Sigmoid colon (tissue), 7 donors: ENCODE measurements at regions of chr7 and their contacts with region 1.

Region 1: GRCh38 chr7:85041605-85042216 is 145.1 kb downstream of the SEMA3D start:
- DNase-seq: no peak
- H3K4me3 ChIP-seq: no peak overlapping the region
- H3K27ac ChIP-seq: no peak overlapping the region
- H3K4me1 ChIP-seq: no peaks in the 10 kb centered on the region
- H3K27me3 ChIP-seq: no peaks in the 10 kb centered on the region
- CTCF ChIP-seq: peak; percentile 48 to 70 (median 58)
- EP300 ChIP-seq: no peak
- POLR2A ChIP-seq: no peak

Region 2: GRCh38 chr7:85000735-85001350 is 40.9 kb before region 1 on chr7:
- intact Hi-C with region 1: no loop called
- DNase-seq: no peak
- H3K4me3 ChIP-seq: no peak overlapping the region
- H3K27ac ChIP-seq: no peak overlapping the region
- H3K4me1 ChIP-seq: peaks cover 0 to 43% (median 23%) of the 10 kb centered on the region in 4 donors
- H3K27me3 ChIP-seq: no peaks in the 10 kb centered on the region
- CTCF ChIP-seq: no peak
- EP300 ChIP-seq: no peak
- POLR2A ChIP-seq: no peak

Region 3: GRCh38 chr7:85186521-85187241 is 145.0 kb after region 1 on chr7 and contains the start of gene SEMA3D:
- intact Hi-C with region 1: loop called (anchors 5 kb)
- DNase-seq: peak; percentile 79
- H3K4me3 ChIP-seq: peak within 1 kb of the TSS; percentile 37 to 58 (median 54)
- H3K27ac ChIP-seq: peak within 1 kb of the TSS; percentile 40 to 62 (median 55)
- H3K4me1 ChIP-seq: peaks cover 0 to 22% (median 20%) of the 10 kb centered on the region in 4 donors
- H3K27me3 ChIP-seq: no peaks in the 10 kb centered on the region
- CTCF ChIP-seq: peak in 3 of 4 experiments; percentile 16 to 78 (median 60)
- EP300 ChIP-seq: no peak
- POLR2A ChIP-seq: no peak
- total RNA-seq, gene SEMA3D: 2.5 to 5.5 (median 3.7) TPM

Region 4: DNA sequence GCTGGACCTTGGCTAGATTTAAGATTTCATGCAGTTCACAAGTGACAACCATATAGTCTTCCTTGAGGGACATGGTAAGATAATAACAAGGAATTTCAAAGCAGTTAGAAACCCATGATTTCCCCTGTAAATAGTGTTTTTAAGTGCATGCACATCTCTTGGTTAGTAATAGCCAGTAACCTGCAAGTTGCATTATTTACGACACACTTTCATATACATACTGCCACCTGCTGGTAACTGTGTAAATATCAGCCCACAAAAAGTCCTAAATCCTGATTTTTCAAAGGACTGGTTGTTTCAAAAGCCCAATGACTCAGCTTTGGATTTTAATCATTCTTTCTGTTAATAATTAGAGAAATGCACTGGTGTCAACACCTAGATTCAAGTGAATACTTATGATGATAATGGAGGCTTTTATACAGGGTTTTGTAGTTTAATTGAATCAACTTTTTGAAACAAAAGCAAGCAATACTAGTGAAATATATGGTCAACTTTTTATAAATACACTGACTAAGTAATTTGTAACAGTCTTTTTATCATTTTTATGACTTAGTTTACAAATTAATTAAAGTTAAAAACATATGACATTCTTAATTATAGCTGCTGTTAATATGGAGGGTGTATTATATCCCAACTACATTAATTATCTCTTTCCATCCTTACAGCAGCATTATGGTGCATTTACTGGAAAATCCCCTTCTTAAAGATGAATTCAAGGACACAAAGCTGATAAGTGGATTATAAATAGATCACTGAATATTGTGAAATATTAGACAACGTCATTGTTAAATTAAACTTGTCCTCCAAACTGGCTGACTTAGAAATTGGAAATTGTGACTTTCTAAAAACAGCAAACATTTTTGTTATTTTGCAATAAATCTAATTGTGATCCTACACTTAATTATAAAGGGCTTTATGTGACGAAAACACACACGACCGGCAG is 512.8 kb after region 1 on chr7:
- intact Hi-C with region 1: loop called (anchors 2 kb)
- DNase-seq: no peak
- H3K4me3 ChIP-seq: no peak overlapping the region
- H3K27ac ChIP-seq: no peak overlapping the region
- H3K4me1 ChIP-seq: no peaks in the 10 kb centered on the region
- H3K27me3 ChIP-seq: no peaks in the 10 kb centered on the region
- CTCF ChIP-seq: peak; percentile 28 to 61 (median 48)
- EP300 ChIP-seq: no peak
- POLR2A ChIP-seq: no peak

Region 5: DNA sequence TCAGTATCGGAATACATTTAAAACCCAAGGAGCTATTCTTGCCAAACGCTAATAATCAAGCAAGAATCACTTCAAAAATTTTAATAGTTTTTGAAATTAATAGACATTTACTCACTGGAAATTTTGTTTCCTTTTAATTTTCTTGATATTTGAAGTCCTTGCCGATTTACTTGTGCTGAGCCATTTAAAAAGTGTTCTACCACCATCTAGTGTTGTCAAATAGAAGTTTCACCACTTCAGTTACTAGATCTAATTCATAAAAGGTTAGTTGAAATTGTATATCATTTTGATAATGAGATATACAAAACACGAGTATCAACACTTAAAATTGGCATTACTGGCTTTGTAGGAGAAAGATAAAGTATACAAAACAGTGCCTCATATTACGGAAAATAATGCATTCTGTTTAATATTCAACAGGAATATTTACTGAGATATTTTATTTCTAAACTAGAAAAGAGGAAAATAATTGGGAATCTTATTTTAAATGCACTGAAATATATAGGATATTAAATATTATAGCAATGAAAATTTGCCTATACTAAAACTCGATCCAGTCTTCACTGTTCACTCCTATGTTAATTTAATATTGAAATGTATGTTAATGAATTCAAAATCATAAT is 810.0 kb after region 1 on chr7:
- intact Hi-C with region 1: loop called (anchors 10 kb)
- DNase-seq: no peak
- H3K4me3 ChIP-seq: no peak overlapping the region
- H3K27ac ChIP-seq: no peak overlapping the region
- H3K4me1 ChIP-seq: no peaks in the 10 kb centered on the region
- H3K27me3 ChIP-seq: no peaks in the 10 kb centered on the region
- CTCF ChIP-seq: peak in 1 of 4 experiments; percentile 26
- EP300 ChIP-seq: no peak
- POLR2A ChIP-seq: no peak